ENCODE measurements at regions of chr3 and their contacts with region 1.

Region 1: GRCh38 chr3:123861044-123861836 is 22.9 kb downstream of the MYLK start:
- DNase-seq: no peak
- H3K4me3 ChIP-seq: no peak overlapping the region
- H3K27ac ChIP-seq: peak overlapping the region in 1 of 59 donors; percentile 12
- H3K27me3 ChIP-seq: no peaks in the 10 kb centered on the region
- CTCF ChIP-seq: no peak

Region 2: DNA sequence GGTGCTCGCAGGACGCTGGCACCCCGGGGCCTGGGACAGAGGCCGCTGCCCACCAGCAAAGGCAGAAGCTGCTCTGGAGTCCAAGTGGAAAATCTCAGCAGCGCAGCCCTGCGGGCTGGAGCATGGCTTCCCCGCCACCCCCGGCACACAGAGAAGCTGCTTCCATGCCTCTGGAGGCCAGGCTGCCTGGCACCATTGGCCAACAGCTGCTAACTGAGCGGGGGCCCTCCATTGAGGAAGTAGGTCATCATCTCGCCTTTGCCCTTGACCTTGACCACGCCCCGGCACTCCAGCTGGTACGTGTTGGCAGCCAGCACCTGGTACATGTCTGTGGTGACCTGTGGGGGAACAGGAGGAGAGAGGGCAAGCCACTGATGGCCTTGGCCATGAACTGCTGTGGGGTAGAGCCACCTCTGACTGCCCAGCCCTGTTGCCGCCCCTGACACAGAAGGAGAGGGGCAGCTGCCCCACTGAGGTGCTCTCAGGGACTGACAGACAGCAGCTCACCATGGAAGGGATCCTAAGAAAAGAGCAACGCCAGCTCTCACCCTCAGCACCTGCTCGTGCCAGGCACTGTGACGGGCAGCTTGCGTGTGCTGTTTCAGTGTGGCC is 576.7 kb before region 1 on chr3:
- intact Hi-C with region 1: no loop called
- DNase-seq: no peak
- H3K4me3 ChIP-seq: no peak overlapping the region
- H3K27ac ChIP-seq: peak overlapping the region in 3 of 59 donors; percentile 9 to 61 (median 27)
- H3K27me3 ChIP-seq: no peaks in the 10 kb centered on the region
- CTCF ChIP-seq: no peak

Region 3: GRCh38 chr3:123799544-123800361 is 61.5 kb before region 1 on chr3:
- intact Hi-C with region 1: loop called in 1 of 2 experiments (anchors 10 kb)
- DNase-seq: no peak
- H3K4me3 ChIP-seq: peak overlapping the region in 17 of 59 donors; percentile 6 to 51 (median 28)
- H3K27ac ChIP-seq: no peak overlapping the region
- H3K27me3 ChIP-seq: peaks cover 0 to 6% (median 0%) of the 10 kb centered on the region in 45 donors
- CTCF ChIP-seq: no peak

Measured in dorsolateral prefrontal cortex (tissue), 120 donors.